ENCODE measurements at regions of chr13 and their contacts with region 1.

Region 1: GRCh38 chr13:34145069-34145468 is 327.1 kb downstream of the RFC3 start:
- DNase-seq: no peak
- ATAC-seq: no peak
- H3K4me3 ChIP-seq: no peak overlapping the region
- H3K4me3 Mint-ChIP-seq: no peak overlapping the region
- H3K27ac ChIP-seq: no peak overlapping the region
- H3K27ac Mint-ChIP-seq: no peak overlapping the region
- H3K4me1 ChIP-seq: no peaks in the 10 kb centered on the region
- H3K4me1 Mint-ChIP-seq: no peaks in the 10 kb centered on the region
- H3K27me3 ChIP-seq: no peaks in the 10 kb centered on the region
- H3K27me3 Mint-ChIP-seq: no peaks in the 10 kb centered on the region
- CTCF ChIP-seq: no peak

Region 2: DNA sequence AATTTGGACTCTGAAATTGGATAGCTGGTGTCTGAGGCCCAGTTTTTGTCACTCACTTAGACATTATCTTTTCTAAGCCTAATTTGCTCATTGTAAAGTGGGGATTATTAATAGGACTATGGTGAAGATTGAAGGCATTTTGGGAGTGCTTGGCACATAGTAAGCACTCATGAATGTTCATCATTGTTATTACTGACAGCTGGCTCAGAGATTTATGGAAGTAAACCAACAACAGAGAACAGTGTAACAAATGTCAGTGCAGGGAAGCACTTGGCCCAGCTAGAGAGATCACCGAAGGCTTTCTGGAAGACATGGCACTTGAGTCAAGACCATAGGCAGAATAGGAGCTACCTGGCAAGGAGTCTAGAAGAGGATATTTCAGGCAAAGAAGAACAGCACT is 234.8 kb before region 1 on chr13:
- intact Hi-C with region 1: no loop called
- DNase-seq: no peak
- ATAC-seq: no peak
- H3K4me3 ChIP-seq: no peak overlapping the region
- H3K4me3 Mint-ChIP-seq: no peak overlapping the region
- H3K27ac ChIP-seq: no peak overlapping the region
- H3K27ac Mint-ChIP-seq: no peak overlapping the region
- H3K4me1 ChIP-seq: no peaks in the 10 kb centered on the region
- H3K4me1 Mint-ChIP-seq: no peaks in the 10 kb centered on the region
- H3K27me3 ChIP-seq: no peaks in the 10 kb centered on the region
- H3K27me3 Mint-ChIP-seq: no peaks in the 10 kb centered on the region
- CTCF ChIP-seq: no peak

Region 3: DNA sequence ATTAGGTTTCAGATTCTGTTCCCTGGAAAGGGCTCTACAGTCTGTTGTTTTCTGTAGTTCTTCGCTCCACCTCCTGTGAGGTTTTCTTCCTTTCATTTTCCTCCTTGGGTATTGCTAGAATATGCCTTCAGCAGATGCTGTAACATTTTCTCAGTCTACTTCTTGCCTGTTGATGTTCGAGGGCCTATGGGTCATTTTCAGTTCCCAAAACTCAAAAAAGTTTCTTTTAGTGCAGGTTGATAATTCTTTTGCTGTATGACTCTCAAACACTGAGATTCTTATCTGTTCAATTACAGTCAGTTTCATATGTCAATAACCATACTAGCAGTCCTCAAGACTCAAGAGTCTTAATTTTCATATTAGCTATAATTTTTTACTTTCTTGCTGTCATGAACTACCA is 58.8 kb before region 1 on chr13:
- intact Hi-C with region 1: no loop called
- DNase-seq: no peak
- ATAC-seq: no peak
- H3K4me3 ChIP-seq: no peak overlapping the region
- H3K4me3 Mint-ChIP-seq: no peak overlapping the region
- H3K27ac ChIP-seq: no peak overlapping the region
- H3K27ac Mint-ChIP-seq: no peak overlapping the region
- H3K4me1 ChIP-seq: no peaks in the 10 kb centered on the region
- H3K4me1 Mint-ChIP-seq: no peaks in the 10 kb centered on the region
- H3K27me3 ChIP-seq: no peaks in the 10 kb centered on the region
- H3K27me3 Mint-ChIP-seq: no peaks in the 10 kb centered on the region
- CTCF ChIP-seq: no peak

Region 4: GRCh38 chr13:34128613-34129012 is 16.5 kb before region 1 on chr13:
- intact Hi-C with region 1: loop called (anchors 1 kb)
- DNase-seq: no peak
- ATAC-seq: no peak
- H3K4me3 ChIP-seq: no peak overlapping the region
- H3K4me3 Mint-ChIP-seq: no peak overlapping the region
- H3K27ac ChIP-seq: no peak overlapping the region
- H3K27ac Mint-ChIP-seq: no peak overlapping the region
- H3K4me1 ChIP-seq: no peaks in the 10 kb centered on the region
- H3K4me1 Mint-ChIP-seq: no peaks in the 10 kb centered on the region
- H3K27me3 ChIP-seq: no peaks in the 10 kb centered on the region
- H3K27me3 Mint-ChIP-seq: no peaks in the 10 kb centered on the region
- CTCF ChIP-seq: no peak

Region 5: GRCh38 chr13:34522808-34523207 is 377.7 kb after region 1 on chr13:
- intact Hi-C with region 1: no loop called
- DNase-seq: no peak
- ATAC-seq: no peak
- H3K4me3 ChIP-seq: no peak overlapping the region
- H3K4me3 Mint-ChIP-seq: no peak overlapping the region
- H3K27ac ChIP-seq: no peak overlapping the region
- H3K27ac Mint-ChIP-seq: no peak overlapping the region
- H3K4me1 ChIP-seq: no peaks in the 10 kb centered on the region
- H3K4me1 Mint-ChIP-seq: no peaks in the 10 kb centered on the region
- H3K27me3 ChIP-seq: no peaks in the 10 kb centered on the region
- H3K27me3 Mint-ChIP-seq: no peaks in the 10 kb centered on the region
- CTCF ChIP-seq: no peak

Measured in natural killer cell (primary cell).